ENCODE measurements at regions of chr10 and their contacts with region 1.

Region 1: GRCh38 chr10:62317257-62317656 is 48.6 kb upstream of the RTKN2 start:
- DNase-seq: no peak
- H3K4me3 ChIP-seq: no peak overlapping the region
- H3K27ac ChIP-seq: no peak overlapping the region
- H3K4me1 ChIP-seq: no peaks in the 10 kb centered on the region
- H3K27me3 ChIP-seq: no peaks in the 10 kb centered on the region
- CTCF ChIP-seq: no peak

Region 2: DNA sequence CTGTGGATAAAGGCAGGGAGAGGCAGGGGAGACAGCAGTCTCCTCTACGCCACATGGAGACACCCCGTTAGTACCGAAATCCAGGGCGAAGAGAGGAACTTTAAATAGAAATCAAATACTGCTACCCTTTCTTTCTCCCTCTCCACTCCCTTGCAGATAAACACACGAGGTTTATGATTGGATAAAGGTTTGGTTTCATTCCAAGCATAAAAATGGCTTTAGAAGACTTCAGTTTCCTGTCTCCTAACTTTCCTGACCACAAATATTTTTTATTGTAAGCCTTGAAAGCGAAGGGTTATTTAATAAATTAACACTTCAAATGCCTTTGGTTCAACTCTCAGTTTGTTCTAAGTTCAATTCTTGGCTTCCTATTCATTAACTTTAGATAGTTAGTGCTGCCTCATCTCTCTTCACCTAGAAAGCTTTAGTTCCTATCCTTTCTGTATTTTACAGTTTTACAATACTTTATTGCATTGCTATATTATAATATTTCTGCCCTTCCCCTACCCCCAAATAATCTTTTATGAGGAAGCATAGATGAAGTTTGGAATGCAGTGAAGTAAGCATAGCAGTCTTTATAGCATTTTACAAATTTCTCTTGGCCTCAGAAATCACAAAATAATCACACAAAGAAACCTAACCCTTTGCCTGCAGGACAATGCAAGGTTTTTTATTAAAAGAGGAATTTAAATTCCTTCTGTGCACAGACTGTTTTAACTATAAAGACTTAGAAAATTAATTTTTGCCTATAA is 447.3 kb before region 1 on chr10:
- CTCF ChIA-PET with region 1: no interaction called
- POLR2A ChIA-PET with region 1: no interaction called
- intact Hi-C with region 1: no loop called
- DNase-seq: no peak
- H3K4me3 ChIP-seq: no peak overlapping the region
- H3K27ac ChIP-seq: no peak overlapping the region
- H3K4me1 ChIP-seq: no peaks in the 10 kb centered on the region
- H3K27me3 ChIP-seq: no peaks in the 10 kb centered on the region
- CTCF ChIP-seq: no peak

Region 3: DNA sequence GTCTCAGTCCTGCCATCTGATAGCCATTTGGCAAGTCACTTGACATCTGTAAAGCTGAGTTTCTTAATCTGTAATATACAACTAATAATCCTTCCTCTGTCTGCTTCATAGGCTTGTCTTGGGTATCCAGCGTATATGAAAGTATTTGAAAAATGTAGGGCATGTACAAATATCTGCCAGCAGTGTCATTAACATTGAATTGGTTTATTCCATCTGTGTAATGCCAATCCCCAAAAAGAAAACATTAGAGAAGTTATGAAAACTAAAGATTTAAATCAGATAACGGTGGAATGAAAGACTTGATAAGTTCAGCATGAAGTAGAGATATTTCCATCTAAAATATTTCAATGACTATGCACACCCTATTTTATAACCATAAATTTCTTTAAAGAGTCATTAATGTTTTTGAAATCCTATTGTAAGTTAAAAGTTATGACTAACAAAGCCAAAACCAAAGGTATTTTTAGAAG is 38.8 kb before region 1 on chr10:
- CTCF ChIA-PET with region 1: no interaction called
- POLR2A ChIA-PET with region 1: interaction called, 23 read pairs
- intact Hi-C with region 1: no loop called
- DNase-seq: peak in 1 of 2 experiments; percentile 59
- H3K4me3 ChIP-seq: no peak overlapping the region
- H3K27ac ChIP-seq: no peak overlapping the region
- H3K4me1 ChIP-seq: no peaks in the 10 kb centered on the region
- H3K27me3 ChIP-seq: no peaks in the 10 kb centered on the region
- CTCF ChIP-seq: no peak